GM10248 (cell line): ENCODE measurements at regions of chr17 and their contacts with region 1.

Region 1: GRCh38 chr17:75319904-75320691 is 30.9 kb upstream of the SLC25A19 start:
- DNase-seq: peak; percentile 75
- CTCF ChIP-seq: no peak

Region 2: GRCh38 chr17:75228305-75228704 is 91.8 kb before region 1 on chr17:
- CTCF ChIA-PET with region 1: no interaction called
- POLR2A ChIA-PET with region 1: no interaction called
- DNase-seq: no peak
- CTCF ChIP-seq: no peak

Region 3: GRCh38 chr17:75289115-75289831 is 30.8 kb before region 1 on chr17 and contains the start of gene SLC25A19:
- CTCF ChIA-PET with region 1: interaction called, 33 read pairs
- POLR2A ChIA-PET with region 1: interaction called, 7 read pairs
- DNase-seq: peak; percentile 97
- CTCF ChIP-seq: peak; percentile 49

Region 4: GRCh38 chr17:75307957-75308770 is 11.9 kb before region 1 on chr17:
- CTCF ChIA-PET with region 1: interaction called, 19 read pairs
- POLR2A ChIA-PET with region 1: no interaction called
- DNase-seq: no peak
- CTCF ChIP-seq: no peak

Region 5: DNA sequence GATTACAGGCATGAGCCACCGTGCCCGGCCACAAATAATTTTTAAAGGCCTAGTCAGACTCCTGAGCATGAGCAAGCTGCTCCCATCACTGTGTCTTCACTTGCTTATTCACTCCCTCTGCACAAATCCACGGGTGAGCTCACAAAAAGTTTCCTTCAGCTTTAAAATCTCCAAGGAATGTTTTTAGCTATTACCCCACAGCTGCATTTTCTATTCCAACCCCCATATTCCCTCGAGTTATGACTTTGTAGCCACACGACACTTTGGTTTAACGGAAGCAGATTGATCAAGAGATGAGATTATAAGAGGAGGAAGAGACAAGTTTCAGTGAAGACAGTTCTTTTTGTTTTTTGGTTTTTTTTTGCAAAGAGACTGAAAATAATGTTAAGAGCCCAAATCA is 18.2 kb after region 1 on chr17:
- CTCF ChIA-PET with region 1: interaction called, 53 read pairs
- POLR2A ChIA-PET with region 1: no interaction called
- DNase-seq: no peak
- CTCF ChIP-seq: no peak

Region 6: GRCh38 chr17:75364078-75364477 is 44.0 kb after region 1 on chr17:
- CTCF ChIA-PET with region 1: interaction called, 16 read pairs
- POLR2A ChIA-PET with region 1: no interaction called
- DNase-seq: no peak
- CTCF ChIP-seq: no peak

Region 7: GRCh38 chr17:75400326-75400939 is 80.3 kb after region 1 on chr17:
- CTCF ChIA-PET with region 1: interaction called, 32 read pairs
- POLR2A ChIA-PET with region 1: interaction called, 4 read pairs
- DNase-seq: no peak
- CTCF ChIP-seq: no peak

Region 8: GRCh38 chr17:75412455-75413317 is 92.6 kb after region 1 on chr17:
- CTCF ChIA-PET with region 1: interaction called, 32 read pairs
- POLR2A ChIA-PET with region 1: no interaction called
- DNase-seq: peak; percentile 77
- CTCF ChIP-seq: peak; percentile 65